MCF 10A (cell line): ENCODE measurements at regions of chr11 and their contacts with region 1.

Region 1: DNA sequence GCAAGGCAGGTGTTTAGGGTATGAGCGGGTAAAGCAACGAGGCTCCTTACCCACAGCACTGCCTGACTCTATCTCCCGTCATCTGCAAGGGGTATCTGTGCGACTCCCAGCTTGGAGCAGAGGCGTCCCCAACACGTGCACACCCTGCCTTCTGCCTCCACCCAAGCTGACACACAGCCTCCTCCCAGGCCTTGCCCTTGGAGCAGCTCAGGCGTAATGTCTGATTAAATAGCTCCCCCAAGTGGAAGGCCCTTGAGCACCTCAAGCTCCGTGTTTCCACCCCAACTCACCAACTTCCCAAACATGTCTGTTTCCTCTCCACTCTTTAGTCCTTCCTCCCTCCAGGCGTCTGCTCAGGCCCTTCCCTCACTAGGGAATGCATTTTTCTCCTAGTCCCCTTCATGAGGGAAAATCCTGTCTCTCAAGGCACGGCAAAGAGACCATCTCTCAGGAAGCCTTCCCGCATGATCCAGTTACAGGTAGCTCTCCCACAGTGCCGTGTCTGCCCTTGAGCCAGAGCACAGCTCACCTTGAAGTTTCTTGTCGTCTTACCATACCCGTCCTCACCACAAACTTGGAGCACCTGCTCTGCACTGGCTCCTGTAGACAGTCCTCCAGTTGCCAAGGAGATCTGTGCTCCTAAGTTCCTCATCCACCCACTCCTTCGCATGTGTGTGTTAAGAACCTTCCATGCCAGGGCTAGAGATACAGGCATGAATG is 15.8 kb downstream of the CYB5R2 start:
- DNase-seq: peak; percentile 80
- H3K4me3 Mint-ChIP-seq: no peak overlapping the region
- H3K27ac Mint-ChIP-seq: no peak overlapping the region
- H3K4me1 Mint-ChIP-seq: no peaks in the 10 kb centered on the region
- H3K27me3 Mint-ChIP-seq: no peaks in the 10 kb centered on the region
- CTCF ChIP-seq: peak; percentile 65

Region 2: DNA sequence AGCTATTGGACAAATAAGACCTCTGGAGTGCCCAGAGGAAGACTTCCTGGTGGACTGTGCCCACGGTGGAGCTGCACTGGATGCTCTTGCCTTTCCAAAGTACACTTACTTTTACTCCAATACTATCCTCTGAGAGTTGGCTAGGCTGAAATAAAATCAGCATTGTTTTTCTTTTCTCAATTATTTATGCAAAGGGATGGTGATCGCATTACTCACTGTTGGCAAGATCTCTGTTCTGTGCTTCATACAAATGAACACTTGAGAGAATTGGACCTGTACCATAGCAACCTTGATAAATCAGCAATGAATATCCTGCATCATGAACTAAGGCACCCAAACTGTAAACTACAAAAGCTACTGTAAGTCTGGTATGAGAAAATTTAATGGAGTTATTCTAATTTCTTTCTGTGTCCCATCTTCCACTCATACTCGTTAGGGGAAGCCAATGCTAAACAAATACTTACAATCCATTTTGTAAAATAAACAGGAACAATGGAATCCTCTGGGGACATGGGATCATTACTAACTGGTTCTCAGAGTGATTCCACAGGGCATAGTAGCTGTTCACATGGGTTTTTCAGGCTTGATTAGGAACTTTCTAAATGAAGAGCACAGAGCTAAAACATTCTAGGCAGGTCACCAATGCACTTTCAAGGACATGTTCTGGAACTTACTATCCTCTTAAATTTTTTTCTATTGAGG is 610.8 kb before region 1 on chr11:
- CTCF ChIA-PET with region 1: no interaction called
- POLR2A ChIA-PET with region 1: no interaction called
- intact Hi-C with region 1: no loop called
- DNase-seq: peak; percentile 3
- H3K4me3 Mint-ChIP-seq: no peak overlapping the region
- H3K27ac Mint-ChIP-seq: no peak overlapping the region
- H3K4me1 Mint-ChIP-seq: no peaks in the 10 kb centered on the region
- H3K27me3 Mint-ChIP-seq: no peaks in the 10 kb centered on the region
- CTCF ChIP-seq: no peak

Region 3: GRCh38 chr11:7442588-7443215 is 214.8 kb before region 1 on chr11:
- CTCF ChIA-PET with region 1: interaction called, 10 read pairs
- POLR2A ChIA-PET with region 1: no interaction called
- intact Hi-C with region 1: loop called (anchors 1 kb)
- DNase-seq: peak; percentile 70
- H3K4me3 Mint-ChIP-seq: no peak overlapping the region
- H3K27ac Mint-ChIP-seq: no peak overlapping the region
- H3K4me1 Mint-ChIP-seq: peaks cover 5% of the 10 kb centered on the region
- H3K27me3 Mint-ChIP-seq: no peaks in the 10 kb centered on the region
- CTCF ChIP-seq: peak; percentile 86

Region 4: DNA sequence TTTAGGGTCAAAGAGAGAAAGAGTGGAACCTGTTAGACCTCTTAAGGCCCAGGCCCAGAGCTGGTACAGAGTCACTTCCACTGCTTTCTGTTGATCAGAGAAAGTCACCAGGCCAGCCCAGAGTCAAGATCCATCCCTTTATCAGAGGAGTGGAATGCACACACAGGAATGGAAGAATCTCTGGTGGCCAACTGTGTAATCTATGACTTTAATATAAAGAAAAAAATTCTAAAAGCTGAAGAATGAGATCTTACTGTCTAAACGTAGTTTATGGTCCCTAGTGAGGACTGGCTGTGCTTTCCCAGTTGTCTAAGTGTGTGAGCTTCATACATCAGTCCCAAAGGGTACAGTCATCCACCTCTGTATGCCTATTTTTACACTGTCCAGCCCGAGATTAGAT is 92.7 kb before region 1 on chr11:
- CTCF ChIA-PET with region 1: interaction called, 488 read pairs
- POLR2A ChIA-PET with region 1: no interaction called
- intact Hi-C with region 1: no loop called
- DNase-seq: no peak
- H3K4me3 Mint-ChIP-seq: no peak overlapping the region
- H3K27ac Mint-ChIP-seq: no peak overlapping the region
- H3K4me1 Mint-ChIP-seq: no peaks in the 10 kb centered on the region
- H3K27me3 Mint-ChIP-seq: no peaks in the 10 kb centered on the region
- CTCF ChIP-seq: no peak

Region 5: GRCh38 chr11:7592711-7593110 is 64.8 kb before region 1 on chr11:
- CTCF ChIA-PET with region 1: interaction called, 16 read pairs
- POLR2A ChIA-PET with region 1: no interaction called
- intact Hi-C with region 1: no loop called
- DNase-seq: peak; percentile 95
- H3K4me3 Mint-ChIP-seq: no peak overlapping the region
- H3K27ac Mint-ChIP-seq: peak overlapping the region; percentile 79
- H3K4me1 Mint-ChIP-seq: peaks cover 38% of the 10 kb centered on the region
- H3K27me3 Mint-ChIP-seq: no peaks in the 10 kb centered on the region
- CTCF ChIP-seq: no peak

Region 6: GRCh38 chr11:7637447-7638157 is 19.9 kb before region 1 on chr11:
- CTCF ChIA-PET with region 1: interaction called, 37 read pairs
- POLR2A ChIA-PET with region 1: interaction called, 3 read pairs
- intact Hi-C with region 1: no loop called
- DNase-seq: peak; percentile 67
- H3K4me3 Mint-ChIP-seq: no peak overlapping the region
- H3K27ac Mint-ChIP-seq: peak overlapping the region; percentile 62
- H3K4me1 Mint-ChIP-seq: peaks cover 11% of the 10 kb centered on the region
- H3K27me3 Mint-ChIP-seq: no peaks in the 10 kb centered on the region
- CTCF ChIP-seq: no peak

Region 7: GRCh38 chr11:7851391-7851790 is 193.9 kb after region 1 on chr11:
- CTCF ChIA-PET with region 1: no interaction called
- POLR2A ChIA-PET with region 1: no interaction called
- intact Hi-C with region 1: no loop called
- DNase-seq: peak; percentile 18
- H3K4me3 Mint-ChIP-seq: no peak overlapping the region
- H3K27ac Mint-ChIP-seq: no peak overlapping the region
- H3K4me1 Mint-ChIP-seq: no peaks in the 10 kb centered on the region
- H3K27me3 Mint-ChIP-seq: no peaks in the 10 kb centered on the region
- CTCF ChIP-seq: no peak

Region 8: GRCh38 chr11:7927635-7928034 is 270.2 kb after region 1 on chr11:
- CTCF ChIA-PET with region 1: no interaction called
- POLR2A ChIA-PET with region 1: no interaction called
- intact Hi-C with region 1: no loop called
- DNase-seq: peak; percentile 17
- H3K4me3 Mint-ChIP-seq: no peak overlapping the region
- H3K27ac Mint-ChIP-seq: no peak overlapping the region
- H3K4me1 Mint-ChIP-seq: no peaks in the 10 kb centered on the region
- H3K27me3 Mint-ChIP-seq: no peaks in the 10 kb centered on the region
- CTCF ChIP-seq: no peak